ENCODE measurements at regions of chr6 and their contacts with region 1.

Region 1: DNA sequence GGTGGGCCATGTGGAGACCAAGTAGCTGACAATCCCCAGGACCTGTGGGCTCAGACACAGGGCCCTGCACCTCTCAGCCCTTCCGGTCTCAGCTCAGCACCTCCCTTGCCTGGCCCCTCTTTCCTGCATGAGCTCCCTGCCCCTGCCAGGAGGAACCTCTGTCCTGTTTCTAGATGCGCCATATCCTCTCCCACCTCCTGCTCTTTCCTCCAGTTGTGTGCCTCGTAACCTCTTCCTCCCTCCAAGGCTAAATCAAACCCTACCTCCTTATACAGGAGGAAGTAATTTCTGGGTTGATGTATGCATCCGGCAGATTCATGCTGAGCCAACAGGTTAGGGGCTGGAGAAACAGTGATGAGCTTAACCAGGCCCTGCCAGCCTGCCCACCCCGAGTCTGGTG is 30.9 kb downstream of the ITPR3 start:
- DNase-seq: no peak
- H3K4me3 ChIP-seq: no peak overlapping the region
- H3K27ac ChIP-seq: no peak overlapping the region
- H3K4me1 ChIP-seq: no peaks in the 10 kb centered on the region
- H3K27me3 ChIP-seq: no peaks in the 10 kb centered on the region
- CTCF ChIP-seq: no peak

Region 2: DNA sequence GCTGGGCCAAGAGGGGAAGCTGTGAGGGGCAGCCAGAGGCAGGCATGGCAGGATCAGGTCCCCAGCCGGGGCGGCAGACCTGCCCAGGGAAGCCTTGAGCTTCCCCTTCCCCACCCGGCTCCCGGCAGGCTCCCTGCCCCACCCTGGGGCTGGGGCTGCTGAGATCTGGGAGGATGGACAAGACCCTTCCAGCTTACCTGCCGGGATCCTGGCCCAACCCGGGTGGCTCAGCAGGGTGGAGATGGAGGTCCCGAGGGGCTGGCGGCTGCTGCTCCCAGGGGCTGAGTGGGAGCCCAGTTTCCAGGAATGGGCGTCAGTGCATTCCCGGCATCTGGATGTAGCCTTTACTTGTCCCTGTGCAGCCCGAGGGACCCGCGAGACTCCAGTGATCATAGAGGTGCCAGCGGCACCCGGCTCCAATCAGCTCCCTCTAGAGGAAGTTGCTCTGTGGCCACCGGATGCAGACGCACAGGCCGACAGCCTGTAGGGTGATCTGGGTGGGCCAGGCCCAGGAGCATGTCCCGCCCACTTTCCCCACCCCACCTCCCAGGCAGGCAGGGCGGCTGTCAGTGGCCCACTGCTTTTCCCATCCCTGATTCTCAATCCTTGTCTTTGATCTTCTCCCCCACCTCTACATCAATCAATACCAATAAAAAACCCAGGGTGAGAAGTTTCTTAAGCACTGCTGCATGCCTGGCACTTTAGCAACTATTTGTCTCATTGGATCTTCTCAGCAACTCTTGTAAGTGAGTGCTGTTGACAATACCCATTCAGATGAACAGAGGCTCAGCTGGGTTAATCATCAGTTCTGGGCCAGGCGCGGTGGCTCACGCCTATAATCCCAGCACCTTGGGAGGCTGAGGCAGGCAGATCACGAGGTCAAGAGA is 71.9 kb before region 1 on chr6 and contains the start of gene BAK1:
- CTCF ChIA-PET with region 1: no interaction called
- POLR2A ChIA-PET with region 1: interaction called, 10 read pairs
- intact Hi-C with region 1: no loop called
- DNase-seq: peak; percentile 84 to 87
- H3K4me3 ChIP-seq: peak within 1 kb of the TSS; percentile 98
- H3K27ac ChIP-seq: no peak within 1 kb of the TSS
- H3K4me1 ChIP-seq: peaks cover 15% of the 10 kb centered on the region
- H3K27me3 ChIP-seq: no peaks in the 10 kb centered on the region
- CTCF ChIP-seq: peak; percentile 59
- total RNA-seq, gene BAK1: 24.6 and 28.4 TPM in 2 replicates

Region 3: GRCh38 chr6:33668927-33669326 is 16.9 kb after region 1 on chr6:
- CTCF ChIA-PET with region 1: no interaction called
- POLR2A ChIA-PET with region 1: no interaction called
- intact Hi-C with region 1: no loop called
- DNase-seq: peak; percentile 74 to 81
- H3K4me3 ChIP-seq: no peak overlapping the region
- H3K27ac ChIP-seq: peak overlapping the region; percentile 29; the same call in 1 of the 2 replicates
- H3K4me1 ChIP-seq: peaks cover 15% of the 10 kb centered on the region
- H3K27me3 ChIP-seq: no peaks in the 10 kb centered on the region
- CTCF ChIP-seq: no peak